ENCODE measurements at regions of chr5 and their contacts with region 1.

Region 1: GRCh38 chr5:33997331-33997983 is 10.4 kb downstream of the AMACR start:
- DNase-seq: peak in 9 of 10 donors; percentile 14 to 89 (median 45)

Region 2: DNA sequence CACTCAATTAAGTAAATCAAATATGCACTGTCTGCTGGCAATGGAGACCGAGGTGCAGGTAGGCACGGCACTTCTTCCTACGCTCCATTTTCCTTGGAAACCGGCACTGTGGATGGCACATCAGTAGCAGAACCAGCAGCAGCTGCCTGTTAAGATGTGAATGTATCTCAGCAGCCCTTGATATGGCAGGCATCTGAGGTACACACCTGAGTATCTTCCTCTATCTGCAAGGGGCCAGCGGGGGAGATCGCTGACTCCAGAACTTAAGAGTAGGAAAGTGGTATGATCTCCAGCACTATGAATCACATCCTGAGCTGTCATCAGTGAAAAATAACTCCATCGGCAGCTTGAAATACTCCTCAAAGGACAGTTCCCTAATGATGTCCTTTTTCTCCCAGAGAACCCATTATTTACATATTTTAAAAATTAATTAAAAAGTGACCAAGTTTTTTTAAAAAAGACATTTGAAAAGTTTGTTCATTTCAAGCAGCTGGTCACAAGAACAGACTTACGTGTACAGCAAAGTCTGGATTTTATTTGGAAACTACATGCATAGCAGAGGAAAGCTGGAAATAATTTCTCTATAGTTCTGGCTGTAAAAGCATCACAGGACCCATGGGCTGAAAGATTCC is 202.8 kb before region 1 on chr5:
- intact Hi-C with region 1: no loop called
- DNase-seq: no peak

Region 3: DNA sequence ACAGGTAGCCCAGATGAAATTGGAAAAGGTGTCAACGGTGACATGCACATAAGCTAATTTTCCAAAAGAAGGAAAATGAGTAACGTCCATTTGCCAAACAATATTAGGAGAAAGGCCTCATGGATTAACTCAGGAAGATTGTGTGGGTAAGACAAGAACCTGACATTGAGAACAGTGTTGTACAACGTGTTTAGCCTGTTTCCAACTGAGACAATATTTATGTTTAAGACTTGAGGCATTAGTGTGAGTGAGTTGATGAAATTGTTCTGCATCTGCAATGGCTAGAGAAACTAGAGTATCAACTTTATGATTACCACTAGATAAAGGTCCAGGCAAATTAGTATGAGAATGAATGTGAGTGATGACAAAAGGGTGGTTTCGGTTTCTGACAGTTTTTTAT is 467.4 kb after region 1 on chr5:
- intact Hi-C with region 1: loop called (anchors 5 kb)
- DNase-seq: no peak